Left cardiac atrium (tissue), 4 donors: ENCODE measurements at regions of chr1 and their contacts with region 1.

Region 1: GRCh38 chr1:214213136-214213535 is 67.8 kb upstream of the SMYD2 start:
- DNase-seq: no peak
- ATAC-seq: peak in 1 of 2 donors; percentile 26

Region 2: GRCh38 chr1:214261206-214262123 is 48.3 kb after region 1 on chr1:
- intact Hi-C with region 1: loop called in 1 of 2 experiments (anchors 5 kb)
- DNase-seq: peak; percentile 83
- ATAC-seq: peak; percentile 97

Region 3: DNA sequence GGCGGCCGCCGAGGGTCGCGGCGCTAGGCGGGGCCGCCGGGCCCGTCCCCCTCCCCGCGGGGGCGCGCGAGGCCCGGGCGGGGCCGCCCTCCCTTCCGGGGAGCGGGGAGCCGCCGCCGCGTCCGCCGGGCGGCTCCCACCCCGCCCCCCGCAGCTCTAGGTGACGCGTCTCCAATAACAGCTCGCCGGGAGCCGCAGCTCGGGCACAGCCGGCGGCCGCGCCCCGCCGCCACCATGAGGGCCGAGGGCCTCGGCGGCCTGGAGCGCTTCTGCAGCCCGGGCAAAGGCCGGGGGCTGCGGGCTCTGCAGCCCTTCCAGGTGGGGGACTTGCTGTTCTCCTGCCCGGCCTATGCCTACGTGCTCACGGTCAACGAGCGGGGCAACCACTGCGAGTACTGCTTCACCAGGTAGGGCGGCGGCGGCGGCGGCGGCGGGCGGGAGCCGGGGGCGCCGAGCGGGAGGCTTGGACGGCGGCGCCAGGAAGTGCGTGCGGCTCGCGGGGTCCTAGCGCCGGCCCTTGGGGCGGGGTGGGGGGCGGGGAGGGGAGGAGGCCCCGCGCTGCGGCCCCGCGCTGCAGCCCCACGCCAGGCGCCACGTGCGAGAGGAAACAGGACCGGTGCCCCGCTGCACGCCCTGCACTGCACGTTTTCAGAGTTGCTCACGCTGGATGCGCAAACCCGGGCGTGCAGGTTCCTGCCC is 68.0 kb after region 1 on chr1 and contains the start of gene SMYD2:
- intact Hi-C with region 1: no loop called
- DNase-seq: peak; percentile 72
- ATAC-seq: peak; percentile 91 to 92
- total RNA-seq, gene SMYD2: 8.7 to 9.4 TPM

Region 4: GRCh38 chr1:214328770-214329469 is 115.8 kb after region 1 on chr1:
- intact Hi-C with region 1: loop called (anchors 1 to 5 kb)
- DNase-seq: peak; percentile 80
- ATAC-seq: peak; percentile 92 to 93